BJ (cell line): ENCODE measurements at regions of chr4 and their contacts with region 1.

Region 1: DNA sequence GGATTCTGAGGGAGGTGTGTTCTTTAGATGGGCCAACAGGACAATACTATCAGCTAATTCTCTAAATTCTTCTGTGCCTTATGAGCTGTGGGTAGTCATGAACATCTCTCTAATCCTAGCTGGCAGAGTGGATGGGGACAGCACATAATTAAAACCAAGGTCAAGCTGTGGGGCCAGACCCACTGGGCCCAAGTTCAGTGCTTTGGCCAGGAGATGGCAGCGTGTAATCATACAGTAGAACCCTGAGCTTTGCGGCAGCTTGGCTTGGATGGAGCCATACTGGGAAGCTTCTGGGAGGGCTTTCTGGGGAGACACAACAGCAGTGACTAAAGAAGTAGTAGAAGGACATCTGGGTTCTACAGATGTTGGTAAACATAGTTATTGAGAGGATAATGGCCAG is 140.3 kb upstream of the CXCL13 start:
- DNase-seq: no peak
- H3K4me3 ChIP-seq: no peak overlapping the region
- H3K27me3 ChIP-seq: no peaks in the 10 kb centered on the region
- CTCF ChIP-seq: peak; percentile 47

Region 2: GRCh38 chr4:77697860-77698590 is 232.8 kb after region 1 on chr4:
- CTCF ChIA-PET with region 1: interaction called, 13 read pairs
- POLR2A ChIA-PET with region 1: no interaction called
- DNase-seq: no peak
- H3K4me3 ChIP-seq: no peak overlapping the region
- H3K27me3 ChIP-seq: no peaks in the 10 kb centered on the region
- CTCF ChIP-seq: peak; percentile 65